Common myeloid progenitor, CD34-positive (primary cell): ENCODE measurements at regions of chr4 and their contacts with region 1.

Region 1: GRCh38 chr4:87375719-87376291 is 15.2 kb downstream of the HSD17B11 start:
- DNase-seq: peak; percentile 64 to 76 (median 68)
- H3K4me3 ChIP-seq: no peak overlapping the region
- H3K27ac ChIP-seq: no peak overlapping the region
- H3K4me1 ChIP-seq: peaks cover 0 to 2% (median 0%) of the 10 kb centered on the region in 4 experiments
- H3K27me3 ChIP-seq: no peaks in the 10 kb centered on the region

Region 2: GRCh38 chr4:87260477-87260876 is 115.3 kb before region 1 on chr4:
- CTCF ChIA-PET with region 1: no interaction called
- POLR2A ChIA-PET with region 1: no interaction called
- DNase-seq: no peak
- H3K4me3 ChIP-seq: no peak overlapping the region
- H3K27ac ChIP-seq: no peak overlapping the region
- H3K4me1 ChIP-seq: peaks cover 0 to 8% (median 3%) of the 10 kb centered on the region in 4 experiments
- H3K27me3 ChIP-seq: no peaks in the 10 kb centered on the region

Region 3: DNA sequence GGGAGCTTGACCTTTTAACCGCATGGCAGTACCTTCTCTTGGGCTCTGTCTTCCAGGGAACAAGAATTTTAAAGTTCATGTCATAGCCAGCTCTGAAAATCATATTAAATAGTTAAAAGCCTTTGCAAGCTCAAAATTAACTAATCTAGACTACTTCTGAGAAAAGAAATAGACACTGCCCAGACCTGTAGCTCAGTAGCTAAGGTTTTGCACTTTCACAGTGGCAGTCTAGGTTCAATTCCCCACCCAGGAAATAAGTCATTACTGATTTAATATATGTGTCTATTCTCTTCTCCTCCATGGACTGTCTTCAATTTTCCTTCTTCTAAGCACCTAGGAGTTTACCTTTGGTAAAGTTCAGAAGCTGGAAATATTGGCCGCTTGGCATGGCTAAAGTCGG is 12.2 kb before region 1 on chr4:
- CTCF ChIA-PET with region 1: interaction called, 20 read pairs
- POLR2A ChIA-PET with region 1: no interaction called
- DNase-seq: no peak
- H3K4me3 ChIP-seq: no peak overlapping the region
- H3K27ac ChIP-seq: no peak overlapping the region
- H3K4me1 ChIP-seq: no peaks in the 10 kb centered on the region
- H3K27me3 ChIP-seq: no peaks in the 10 kb centered on the region

Region 4: GRCh38 chr4:87390891-87391575 is 15.2 kb after region 1 on chr4 and contains the start of gene HSD17B11:
- CTCF ChIA-PET with region 1: interaction called, 23 read pairs
- POLR2A ChIA-PET with region 1: interaction called, 3 read pairs
- DNase-seq: peak; percentile 96 to 98 (median 97)
- H3K4me3 ChIP-seq: peak within 1 kb of the TSS; percentile 52 to 100 (median 95)
- H3K27ac ChIP-seq: peak within 1 kb of the TSS; percentile 86 to 95
- H3K4me1 ChIP-seq: peaks cover 0 to 21% (median 12%) of the 10 kb centered on the region in 4 experiments
- H3K27me3 ChIP-seq: no peaks in the 10 kb centered on the region

Region 5: GRCh38 chr4:87465739-87466366 is 90.0 kb after region 1 on chr4:
- CTCF ChIA-PET with region 1: interaction called, 91 read pairs
- POLR2A ChIA-PET with region 1: no interaction called
- DNase-seq: peak; percentile 58 to 83 (median 79)
- H3K4me3 ChIP-seq: no peak overlapping the region
- H3K27ac ChIP-seq: no peak overlapping the region
- H3K4me1 ChIP-seq: no peaks in the 10 kb centered on the region
- H3K27me3 ChIP-seq: no peaks in the 10 kb centered on the region

Region 6: DNA sequence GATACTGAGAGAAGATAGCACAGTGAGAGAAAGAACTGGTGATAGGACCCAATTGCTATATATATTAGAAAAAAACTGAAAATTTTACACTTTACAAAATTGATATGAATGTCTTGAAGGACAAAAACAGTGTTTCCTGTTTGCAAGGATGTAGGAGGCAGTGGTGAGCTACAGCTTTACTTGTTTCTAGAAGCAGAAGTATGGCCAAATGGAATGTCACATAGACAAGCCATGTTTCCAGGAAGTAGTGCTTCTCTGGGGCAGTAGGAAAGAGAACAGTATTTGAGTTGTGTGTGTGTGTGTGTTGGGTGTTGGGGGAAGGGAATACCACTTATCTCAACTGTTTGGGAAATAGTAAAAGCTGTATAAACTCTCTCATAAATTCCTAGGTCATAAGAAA is 362.7 kb after region 1 on chr4:
- CTCF ChIA-PET with region 1: no interaction called
- POLR2A ChIA-PET with region 1: no interaction called
- DNase-seq: no peak
- H3K4me3 ChIP-seq: no peak overlapping the region
- H3K27ac ChIP-seq: no peak overlapping the region
- H3K4me1 ChIP-seq: no peaks in the 10 kb centered on the region
- H3K27me3 ChIP-seq: no peaks in the 10 kb centered on the region

Region 7: DNA sequence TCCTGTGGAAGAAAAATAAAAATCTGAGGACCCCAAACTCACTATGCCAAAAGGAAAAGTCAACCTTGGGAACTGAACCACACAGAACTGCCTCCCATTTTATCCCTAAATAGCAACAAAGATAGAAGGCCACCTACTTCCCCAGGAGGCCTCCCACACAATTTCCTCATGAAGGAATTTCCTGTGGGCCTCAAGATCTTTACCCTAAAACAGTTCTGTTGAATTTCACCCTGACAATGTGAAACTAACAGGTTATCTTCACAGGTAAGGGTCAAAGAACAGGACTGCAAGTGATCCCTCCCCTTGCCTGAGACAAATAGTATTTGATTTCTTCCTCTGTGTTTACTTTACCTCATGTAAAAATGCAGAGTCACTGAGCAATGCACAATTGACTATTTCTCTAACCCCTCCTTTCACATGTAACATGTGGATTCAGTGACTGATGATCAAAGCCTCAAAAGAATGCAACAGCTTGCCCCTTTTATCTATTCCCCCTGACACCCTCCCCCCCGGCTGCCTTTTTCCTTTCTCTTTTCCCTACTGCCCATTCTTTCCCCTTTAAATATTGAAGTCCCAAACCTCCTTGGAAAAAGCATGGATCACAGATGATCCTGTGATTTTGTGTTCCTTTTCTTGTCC is 490.3 kb after region 1 on chr4:
- CTCF ChIA-PET with region 1: no interaction called
- POLR2A ChIA-PET with region 1: no interaction called
- DNase-seq: peak in 2 of 3 donors; percentile 37 to 52
- H3K4me3 ChIP-seq: no peak overlapping the region
- H3K27ac ChIP-seq: no peak overlapping the region
- H3K4me1 ChIP-seq: peaks cover 7 to 22% (median 14%) of the 10 kb centered on the region in 4 experiments
- H3K27me3 ChIP-seq: no peaks in the 10 kb centered on the region